CD4-positive, alpha-beta T cell (primary cell): ENCODE measurements at regions of chr1 and their contacts with region 1.

Region 1: GRCh38 chr1:50959913-50960844 is at the start of gene FAF1:
- DNase-seq: peak; percentile 95 to 99 (median 97)
- ATAC-seq: peak; percentile 87
- H3K4me3 ChIP-seq: peak within 1 kb of the TSS; percentile 94
- H3K4me3 Mint-ChIP-seq: peak within 1 kb of the TSS; percentile 98
- H3K27ac ChIP-seq: peak within 1 kb of the TSS; percentile 40 to 77
- H3K27ac Mint-ChIP-seq: peak within 1 kb of the TSS; percentile 50
- H3K4me1 ChIP-seq: peaks cover 13% of the 10 kb centered on the region
- H3K4me1 Mint-ChIP-seq: peaks cover 28% of the 10 kb centered on the region
- H3K27me3 ChIP-seq: no peaks in the 10 kb centered on the region
- H3K27me3 Mint-ChIP-seq: no peaks in the 10 kb centered on the region
- CTCF ChIP-seq: no peak
- total RNA-seq, gene FAF1: 43.5 to 44.0 TPM

Region 2: GRCh38 chr1:50929376-50929958 is 30.7 kb before region 1 on chr1:
- CTCF ChIA-PET with region 1: interaction called, 5 read pairs
- POLR2A ChIA-PET with region 1: interaction called, 5 read pairs
- intact Hi-C with region 1: loop called (anchors 2 to 5 kb)
- DNase-seq: peak in 3 of 14 experiments; percentile 39 to 50 (median 46)
- ATAC-seq: no peak
- H3K4me3 ChIP-seq: no peak overlapping the region
- H3K4me3 Mint-ChIP-seq: no peak overlapping the region
- H3K27ac ChIP-seq: no peak overlapping the region
- H3K27ac Mint-ChIP-seq: no peak overlapping the region
- H3K4me1 ChIP-seq: no peaks in the 10 kb centered on the region
- H3K4me1 Mint-ChIP-seq: peaks cover 25% of the 10 kb centered on the region
- H3K27me3 ChIP-seq: no peaks in the 10 kb centered on the region
- H3K27me3 Mint-ChIP-seq: no peaks in the 10 kb centered on the region
- CTCF ChIP-seq: peak; percentile 69

Region 3: DNA sequence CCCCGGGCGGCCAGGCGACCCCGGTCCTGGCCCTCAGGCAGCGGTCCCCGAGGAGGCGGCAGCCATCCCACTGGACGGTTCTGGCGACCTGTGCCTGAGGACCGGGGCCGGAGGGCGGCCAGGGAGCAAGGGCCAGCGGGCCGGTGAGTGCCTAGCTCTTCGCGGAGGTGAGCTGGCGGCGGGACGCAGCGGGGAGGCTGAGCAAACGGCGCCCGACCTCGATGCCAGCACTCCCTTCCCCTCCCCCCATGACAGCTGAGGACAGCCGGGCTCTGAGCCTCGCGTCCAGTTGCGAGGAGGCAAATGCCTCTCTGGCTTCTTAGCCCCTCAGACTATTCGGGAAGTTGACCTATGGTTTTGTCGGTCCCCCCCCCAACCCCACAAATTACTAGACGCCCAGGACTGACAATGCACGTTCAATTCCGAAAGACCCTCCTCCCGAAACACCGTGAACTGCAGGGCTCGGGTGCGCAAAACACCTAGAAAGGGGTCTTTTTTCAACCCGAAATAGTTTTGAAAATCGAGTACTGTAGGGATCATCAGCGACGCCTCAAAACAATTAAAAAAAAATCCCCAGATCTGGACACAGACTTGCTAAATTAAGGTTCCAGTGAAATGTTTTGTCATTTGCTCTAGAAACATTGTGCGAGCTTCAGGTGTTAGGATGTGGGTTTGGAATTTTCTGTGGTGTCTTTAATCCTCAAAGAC is 18.1 kb after region 1 on chr1:
- CTCF ChIA-PET with region 1: interaction called, 3 read pairs
- POLR2A ChIA-PET with region 1: interaction called, 32 read pairs
- intact Hi-C with region 1: no loop called
- DNase-seq: peak in 6 of 14 experiments; percentile 8 to 65 (median 38)
- ATAC-seq: peak; percentile 29
- H3K4me3 ChIP-seq: peak overlapping the region; percentile 73
- H3K4me3 Mint-ChIP-seq: peak overlapping the region; percentile 92
- H3K27ac ChIP-seq: no peak overlapping the region
- H3K27ac Mint-ChIP-seq: peak overlapping the region; percentile 67
- H3K4me1 ChIP-seq: peaks cover 23% of the 10 kb centered on the region
- H3K4me1 Mint-ChIP-seq: peaks cover 27% of the 10 kb centered on the region
- H3K27me3 ChIP-seq: peaks cover 4 to 10% of the 10 kb centered on the region in 2 experiments
- H3K27me3 Mint-ChIP-seq: peaks cover 24% of the 10 kb centered on the region
- CTCF ChIP-seq: no peak

Region 4: DNA sequence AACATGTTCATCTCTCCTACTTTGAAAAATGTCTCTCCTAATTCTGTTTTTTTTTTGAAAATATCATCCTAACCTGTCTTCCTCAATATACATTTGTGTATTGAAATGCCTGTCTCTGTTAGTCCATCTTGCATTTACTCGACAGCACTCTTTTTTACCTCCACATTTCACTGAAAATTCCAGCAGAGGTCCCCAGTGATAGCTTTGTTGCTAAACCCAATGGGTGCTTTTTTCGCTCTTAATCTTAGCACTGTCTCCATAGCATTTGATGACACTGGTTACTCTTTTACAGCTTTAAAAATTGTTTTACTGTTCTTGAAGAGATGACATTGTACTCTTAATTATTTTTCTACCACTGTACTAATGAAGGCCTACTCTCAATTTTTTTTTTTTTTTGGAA is 667.5 kb after region 1 on chr1:
- CTCF ChIA-PET with region 1: no interaction called
- POLR2A ChIA-PET with region 1: no interaction called
- intact Hi-C with region 1: loop called in 1 of 2 experiments (anchors 10 kb)
- DNase-seq: peak in 1 of 14 experiments; percentile 24
- ATAC-seq: peak; percentile 37
- H3K4me3 ChIP-seq: no peak overlapping the region
- H3K4me3 Mint-ChIP-seq: no peak overlapping the region
- H3K27ac ChIP-seq: no peak overlapping the region
- H3K27ac Mint-ChIP-seq: no peak overlapping the region
- H3K4me1 ChIP-seq: no peaks in the 10 kb centered on the region
- H3K4me1 Mint-ChIP-seq: peaks cover 43% of the 10 kb centered on the region
- H3K27me3 ChIP-seq: no peaks in the 10 kb centered on the region
- H3K27me3 Mint-ChIP-seq: no peaks in the 10 kb centered on the region
- CTCF ChIP-seq: no peak

Region 5: DNA sequence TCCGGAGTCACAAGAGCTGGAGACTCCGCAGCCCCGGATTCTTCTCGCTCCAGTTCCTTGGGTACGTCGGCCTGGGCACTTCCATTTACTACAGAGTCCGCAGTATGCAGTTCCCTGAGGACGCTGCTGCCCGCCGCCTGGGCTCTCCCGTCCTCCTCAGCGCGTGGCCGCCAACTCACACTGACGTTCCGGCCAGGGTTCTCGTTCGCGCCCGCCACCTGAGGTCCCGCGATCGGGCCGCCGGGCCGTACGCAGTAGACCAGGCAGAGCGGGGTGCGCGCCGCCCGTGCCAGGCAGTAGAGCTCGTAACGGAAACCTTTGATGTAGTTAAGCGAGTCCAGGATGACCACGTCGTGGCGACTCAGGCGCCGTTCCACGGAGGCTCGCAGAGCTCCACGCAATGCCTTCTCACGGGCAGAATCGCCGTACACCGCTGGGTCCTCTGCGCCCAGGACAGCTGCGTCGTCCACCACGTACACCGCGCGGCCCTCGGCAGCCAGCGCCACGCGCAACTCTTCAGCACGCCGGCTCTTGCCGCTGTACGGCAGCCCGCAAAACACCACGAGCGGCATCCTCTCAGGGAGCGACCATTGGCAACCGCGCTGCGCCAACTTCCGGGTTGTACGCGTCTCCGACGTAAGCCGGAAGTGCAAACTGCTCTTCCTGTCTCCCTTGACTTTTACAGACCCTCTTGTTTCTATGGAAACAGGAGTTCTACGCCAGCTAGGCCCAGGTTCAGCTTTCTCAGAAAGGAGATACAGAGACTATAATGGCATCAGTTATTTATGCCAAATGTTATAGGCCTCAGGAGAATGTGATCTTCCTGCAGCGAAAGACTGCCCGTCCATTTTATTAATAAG is 1073.2 kb after region 1 on chr1 and contains the start of gene KTI12:
- CTCF ChIA-PET with region 1: no interaction called
- POLR2A ChIA-PET with region 1: no interaction called
- intact Hi-C with region 1: loop called in 1 of 2 experiments (anchors 10 kb)
- DNase-seq: peak; percentile 78 to 96 (median 86)
- ATAC-seq: peak; percentile 94
- H3K4me3 ChIP-seq: peak within 1 kb of the TSS; percentile 85
- H3K4me3 Mint-ChIP-seq: peak within 1 kb of the TSS; percentile 91
- H3K27ac ChIP-seq: peak within 1 kb of the TSS; percentile 81 to 91
- H3K27ac Mint-ChIP-seq: peak within 1 kb of the TSS; percentile 97
- H3K4me1 ChIP-seq: peaks cover 23% of the 10 kb centered on the region
- H3K4me1 Mint-ChIP-seq: peaks cover 40% of the 10 kb centered on the region
- H3K27me3 ChIP-seq: no peaks in the 10 kb centered on the region
- H3K27me3 Mint-ChIP-seq: no peaks in the 10 kb centered on the region
- CTCF ChIP-seq: no peak
- total RNA-seq, gene KTI12: 23.4 to 24.0 TPM

Region 6: GRCh38 chr1:52365746-52366516 is 1405.8 kb after region 1 on chr1 and contains the start of gene CC2D1B:
- CTCF ChIA-PET with region 1: no interaction called
- POLR2A ChIA-PET with region 1: no interaction called
- intact Hi-C with region 1: loop called in 1 of 2 experiments (anchors 10 kb)
- DNase-seq: peak; percentile 97 to 100 (median 99)
- ATAC-seq: peak; percentile 79
- H3K4me3 ChIP-seq: peak within 1 kb of the TSS; percentile 76
- H3K4me3 Mint-ChIP-seq: peak within 1 kb of the TSS; percentile 94
- H3K27ac ChIP-seq: peak within 1 kb of the TSS; percentile 77 to 89
- H3K27ac Mint-ChIP-seq: peak within 1 kb of the TSS; percentile 96
- H3K4me1 ChIP-seq: peaks cover 50% of the 10 kb centered on the region
- H3K4me1 Mint-ChIP-seq: peaks cover 60% of the 10 kb centered on the region
- H3K27me3 ChIP-seq: no peaks in the 10 kb centered on the region
- H3K27me3 Mint-ChIP-seq: no peaks in the 10 kb centered on the region
- CTCF ChIP-seq: no peak
- total RNA-seq, gene CC2D1B: 46.5 to 47.5 TPM